ENCODE measurements at regions of chr14 and their contacts with region 1.

Region 1: DNA sequence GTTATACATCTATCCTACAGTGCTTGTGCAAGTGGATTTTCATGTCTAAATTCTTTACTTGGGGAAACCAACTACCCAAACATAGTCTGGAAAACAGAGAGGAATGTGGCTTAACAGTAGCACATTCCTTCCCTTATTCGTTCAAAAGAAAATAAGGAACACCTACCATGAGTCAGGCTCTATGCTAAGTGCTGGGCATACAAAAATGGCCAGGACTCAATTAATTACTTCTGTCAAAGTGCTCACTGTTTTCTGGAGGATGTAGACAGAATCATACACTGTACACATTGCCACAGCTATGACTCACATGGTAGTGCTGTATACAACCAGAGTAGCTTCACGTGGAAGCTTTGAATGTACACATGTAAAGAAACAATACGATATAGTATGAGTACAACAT is 50.2 kb downstream of the SLC25A21 start:
- DNase-seq: peak in 1 of 2 experiments; percentile 41
- H3K4me3 ChIP-seq: no peak overlapping the region
- H3K4me3 Mint-ChIP-seq: no peak overlapping the region
- H3K27ac Mint-ChIP-seq: no peak overlapping the region
- H3K4me1 ChIP-seq: peaks cover 15% of the 10 kb centered on the region; the same call in 1 of the 2 replicates
- H3K4me1 Mint-ChIP-seq: peaks cover 20% of the 10 kb centered on the region
- H3K27me3 ChIP-seq: no peaks in the 10 kb centered on the region
- H3K27me3 Mint-ChIP-seq: no peaks in the 10 kb centered on the region
- CTCF ChIP-seq: no peak

Region 2: DNA sequence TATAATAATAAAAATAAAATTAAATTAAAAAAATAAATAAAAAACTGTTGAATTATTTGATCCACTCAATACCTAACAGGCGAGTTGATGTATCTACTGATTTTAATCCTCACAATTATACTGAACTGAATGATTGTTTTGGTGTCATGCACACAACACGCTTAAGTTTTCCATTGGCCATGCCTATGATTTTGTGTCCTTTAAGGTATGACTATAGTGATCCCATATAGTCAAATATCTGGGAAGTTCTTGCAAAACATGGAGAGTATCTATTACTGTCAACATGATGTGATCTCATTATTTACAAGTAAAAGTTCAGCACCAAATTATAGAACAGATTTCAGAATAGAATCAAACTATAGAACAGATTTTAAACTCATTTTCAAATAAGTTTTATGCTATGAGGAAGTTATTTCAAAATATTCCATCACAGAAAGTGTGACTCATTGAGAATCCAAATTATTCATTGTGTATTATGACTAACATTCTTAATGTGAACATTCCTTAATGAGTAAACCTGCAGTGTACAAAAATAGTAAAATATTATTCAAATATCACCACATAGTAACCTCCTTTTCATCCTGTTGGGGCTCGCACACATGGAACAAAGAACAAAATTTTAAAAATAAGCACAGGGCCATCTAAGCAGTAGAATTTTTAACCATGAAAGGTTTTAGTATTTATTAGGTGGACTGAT is 140.3 kb before region 1 on chr14:
- CTCF ChIA-PET with region 1: no interaction called
- POLR2A ChIA-PET with region 1: no interaction called
- intact Hi-C with region 1: loop called (anchors 1 kb)
- DNase-seq: no peak
- H3K4me3 ChIP-seq: no peak overlapping the region
- H3K4me3 Mint-ChIP-seq: no peak overlapping the region
- H3K27ac Mint-ChIP-seq: no peak overlapping the region
- H3K4me1 ChIP-seq: peaks cover 39% of the 10 kb centered on the region
- H3K4me1 Mint-ChIP-seq: peaks cover 21% of the 10 kb centered on the region
- H3K27me3 ChIP-seq: no peaks in the 10 kb centered on the region
- H3K27me3 Mint-ChIP-seq: no peaks in the 10 kb centered on the region
- CTCF ChIP-seq: no peak

Region 3: DNA sequence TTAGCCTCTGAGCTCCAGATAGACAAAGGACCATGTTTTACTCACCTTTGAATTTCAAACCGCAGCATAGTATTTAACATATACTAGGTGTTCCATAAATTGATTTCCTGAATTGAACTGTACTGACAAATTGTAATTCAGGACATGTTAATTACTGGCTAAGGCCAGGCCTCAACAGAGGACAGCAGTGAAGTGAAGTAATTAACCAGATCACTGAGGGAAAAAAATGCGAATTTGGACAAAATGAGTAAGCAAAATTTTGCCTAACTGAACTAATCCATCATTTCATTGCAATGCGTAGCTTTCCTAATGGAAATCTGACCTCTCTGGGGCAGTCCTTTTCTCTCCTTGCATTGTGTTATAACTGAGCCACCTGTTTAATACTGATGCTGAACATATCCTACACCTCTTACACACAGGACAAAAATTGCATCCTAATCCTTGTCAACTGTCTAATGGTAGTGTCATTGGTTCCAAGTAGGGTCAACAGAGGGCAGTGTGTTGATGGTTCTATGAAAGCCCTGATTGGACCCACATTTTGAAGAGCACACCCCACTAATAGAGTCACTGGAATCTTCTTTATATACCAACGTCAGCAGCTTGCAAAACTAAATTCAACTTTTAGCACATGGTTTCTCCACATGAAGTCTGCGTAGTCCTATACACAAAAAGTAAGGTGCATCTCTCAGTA is 98.2 kb before region 1 on chr14:
- CTCF ChIA-PET with region 1: no interaction called
- POLR2A ChIA-PET with region 1: no interaction called
- intact Hi-C with region 1: loop called (anchors 10 kb)
- DNase-seq: no peak
- H3K4me3 ChIP-seq: no peak overlapping the region
- H3K4me3 Mint-ChIP-seq: no peak overlapping the region
- H3K27ac Mint-ChIP-seq: no peak overlapping the region
- H3K4me1 ChIP-seq: no peaks in the 10 kb centered on the region
- H3K4me1 Mint-ChIP-seq: peaks cover 7% of the 10 kb centered on the region
- H3K27me3 ChIP-seq: no peaks in the 10 kb centered on the region
- H3K27me3 Mint-ChIP-seq: no peaks in the 10 kb centered on the region
- CTCF ChIP-seq: peak in 1 of 2 experiments; percentile 15

Region 4: DNA sequence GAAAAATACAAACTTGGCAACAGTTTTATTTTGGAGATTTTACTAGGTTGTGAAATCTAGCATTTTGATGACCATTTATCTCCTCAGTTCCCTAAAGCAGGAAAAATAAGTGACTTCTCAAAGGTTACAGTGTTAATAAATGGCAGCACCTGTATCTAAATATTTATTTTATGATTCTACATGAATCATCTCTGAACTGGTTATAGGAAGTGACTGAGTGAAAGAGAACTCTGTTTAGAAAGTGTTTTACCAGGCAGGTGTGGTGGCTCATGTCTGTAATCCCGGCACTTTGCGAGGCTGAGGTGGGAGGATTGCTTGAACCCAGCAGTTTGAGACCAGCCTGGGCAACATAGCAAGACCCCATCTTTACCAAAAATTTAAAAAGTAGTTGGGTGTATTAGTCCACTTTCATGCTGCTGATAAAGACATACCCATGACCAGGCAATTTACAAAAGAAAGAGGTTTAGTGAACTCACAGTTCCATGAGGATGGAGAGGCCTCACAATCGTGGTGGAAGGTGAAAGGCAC is 101.8 kb after region 1 on chr14:
- CTCF ChIA-PET with region 1: no interaction called
- POLR2A ChIA-PET with region 1: no interaction called
- intact Hi-C with region 1: no loop called
- DNase-seq: no peak
- H3K4me3 ChIP-seq: no peak overlapping the region
- H3K4me3 Mint-ChIP-seq: no peak overlapping the region
- H3K27ac Mint-ChIP-seq: no peak overlapping the region
- H3K4me1 ChIP-seq: no peaks in the 10 kb centered on the region
- H3K4me1 Mint-ChIP-seq: peaks cover 4% of the 10 kb centered on the region
- H3K27me3 ChIP-seq: no peaks in the 10 kb centered on the region
- H3K27me3 Mint-ChIP-seq: no peaks in the 10 kb centered on the region
- CTCF ChIP-seq: no peak

Region 5: DNA sequence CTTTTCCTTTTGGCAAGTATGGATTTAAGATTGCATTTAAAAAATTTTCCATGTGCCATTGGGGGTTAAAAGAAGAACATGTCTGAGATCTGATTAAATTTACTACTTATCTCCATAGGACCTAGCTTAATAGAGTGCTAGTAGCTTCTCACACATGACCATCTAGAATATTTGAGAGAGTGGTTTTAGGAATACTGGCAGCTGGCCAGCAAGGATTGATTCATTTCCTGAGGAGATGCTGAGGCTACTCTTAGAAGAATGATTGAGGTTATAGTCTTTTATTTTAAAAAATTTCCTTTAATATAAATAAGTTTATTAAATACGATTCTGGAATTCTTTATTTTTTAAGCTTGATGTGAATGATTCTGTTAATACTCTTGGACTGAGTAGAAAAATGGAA is 131.7 kb after region 1 on chr14:
- CTCF ChIA-PET with region 1: no interaction called
- POLR2A ChIA-PET with region 1: no interaction called
- intact Hi-C with region 1: no loop called
- DNase-seq: no peak
- H3K4me3 ChIP-seq: no peak overlapping the region
- H3K4me3 Mint-ChIP-seq: no peak overlapping the region
- H3K27ac Mint-ChIP-seq: no peak overlapping the region
- H3K4me1 ChIP-seq: peaks cover 35% of the 10 kb centered on the region
- H3K4me1 Mint-ChIP-seq: peaks cover 18% of the 10 kb centered on the region
- H3K27me3 ChIP-seq: no peaks in the 10 kb centered on the region
- H3K27me3 Mint-ChIP-seq: no peaks in the 10 kb centered on the region
- CTCF ChIP-seq: no peak